Activated T-helper 1 cell treated with anti-CD3 and anti-CD28 coated beads, Interleukin-12 subunit alpha, Interleukin-12 subunit beta, Interleukin-2, Interleukin-4 antibody, amounts not matched to agents 30 ng/mL and 10 ng/mL and 1 ng/mL, durations not matched to agents 14 hours and 24 hours and 36 hours (primary cell): ENCODE measurements at regions of chr7 and their contacts with region 1.

Region 1: DNA sequence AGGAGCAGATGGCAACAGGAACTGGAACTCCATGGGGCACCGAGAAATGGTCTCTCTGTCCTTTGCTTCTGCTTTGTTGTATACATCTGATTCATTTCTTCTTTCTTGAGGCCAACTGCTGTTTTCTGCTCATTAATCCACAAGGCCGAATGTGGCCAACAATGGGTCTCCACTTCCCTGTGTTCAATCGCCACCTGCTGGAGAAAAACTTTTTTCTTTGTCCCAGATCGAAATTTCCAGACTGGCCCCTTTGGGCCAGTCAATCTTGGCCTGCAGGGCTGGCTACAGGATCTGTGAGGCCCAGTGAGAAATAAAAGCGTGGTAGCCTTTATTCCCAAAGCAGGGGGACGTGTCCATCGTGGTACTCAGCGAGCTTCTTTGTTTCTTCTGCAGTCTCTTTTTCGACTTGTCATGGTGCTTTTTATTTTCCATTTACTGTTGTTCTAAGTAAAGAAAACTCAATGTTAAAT is 58.8 kb downstream of the PARP12 start:
- DNase-seq: peak; percentile 6
- H3K4me3 Mint-ChIP-seq: no peak overlapping the region
- H3K27ac Mint-ChIP-seq: no peak overlapping the region
- H3K4me1 Mint-ChIP-seq: no peaks in the 10 kb centered on the region
- H3K27me3 Mint-ChIP-seq: peaks cover 2% of the 10 kb centered on the region

Region 2: DNA sequence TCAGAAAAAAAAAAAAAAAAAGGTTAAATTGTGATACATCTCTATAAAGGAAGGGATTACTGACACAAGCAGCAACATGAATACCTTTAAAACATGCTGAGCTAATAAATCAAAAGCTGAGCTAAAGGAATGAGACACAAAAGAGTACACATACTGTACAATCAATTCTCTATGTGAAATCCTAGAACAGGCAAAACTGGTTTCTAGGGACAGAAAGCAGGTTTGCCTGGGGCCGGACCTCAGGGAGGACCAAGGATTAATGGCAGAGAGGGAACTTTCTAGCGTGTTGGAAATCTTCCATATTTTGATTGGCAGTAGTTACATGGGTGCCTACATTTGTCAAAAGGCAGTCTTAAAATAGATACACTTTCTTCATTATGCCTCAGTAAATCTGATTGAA is 572.9 kb before region 1 on chr7:
- intact Hi-C with region 1: loop called (anchors 2 kb)
- DNase-seq: no peak
- H3K4me3 Mint-ChIP-seq: no peak overlapping the region
- H3K27ac Mint-ChIP-seq: no peak overlapping the region
- H3K4me1 Mint-ChIP-seq: peaks cover 6% of the 10 kb centered on the region
- H3K27me3 Mint-ChIP-seq: no peaks in the 10 kb centered on the region

Region 3: GRCh38 chr7:139500770-139501138 is 503.2 kb before region 1 on chr7:
- intact Hi-C with region 1: loop called (anchors 1 kb)
- DNase-seq: no peak
- H3K4me3 Mint-ChIP-seq: no peak overlapping the region
- H3K27ac Mint-ChIP-seq: no peak overlapping the region
- H3K4me1 Mint-ChIP-seq: peaks cover 15% of the 10 kb centered on the region
- H3K27me3 Mint-ChIP-seq: peaks cover 21% of the 10 kb centered on the region

Region 4: GRCh38 chr7:139602143-139602722 is 401.7 kb before region 1 on chr7:
- intact Hi-C with region 1: loop called (anchors 1 kb)
- DNase-seq: no peak
- H3K4me3 Mint-ChIP-seq: no peak overlapping the region
- H3K27ac Mint-ChIP-seq: no peak overlapping the region
- H3K4me1 Mint-ChIP-seq: no peaks in the 10 kb centered on the region
- H3K27me3 Mint-ChIP-seq: no peaks in the 10 kb centered on the region

Region 5: GRCh38 chr7:139620676-139621344 is 383.1 kb before region 1 on chr7:
- intact Hi-C with region 1: loop called (anchors 1 kb)
- DNase-seq: peak; percentile 26
- H3K4me3 Mint-ChIP-seq: no peak overlapping the region
- H3K27ac Mint-ChIP-seq: peak overlapping the region; percentile 22
- H3K4me1 Mint-ChIP-seq: peaks cover 34% of the 10 kb centered on the region
- H3K27me3 Mint-ChIP-seq: peaks cover 1% of the 10 kb centered on the region

Region 6: GRCh38 chr7:139645572-139646523 is 358.1 kb before region 1 on chr7:
- intact Hi-C with region 1: loop called (anchors 1 kb)
- DNase-seq: peak; percentile 68
- H3K4me3 Mint-ChIP-seq: no peak overlapping the region
- H3K27ac Mint-ChIP-seq: no peak overlapping the region
- H3K4me1 Mint-ChIP-seq: peaks cover 65% of the 10 kb centered on the region
- H3K27me3 Mint-ChIP-seq: peaks cover 1% of the 10 kb centered on the region

Region 7: DNA sequence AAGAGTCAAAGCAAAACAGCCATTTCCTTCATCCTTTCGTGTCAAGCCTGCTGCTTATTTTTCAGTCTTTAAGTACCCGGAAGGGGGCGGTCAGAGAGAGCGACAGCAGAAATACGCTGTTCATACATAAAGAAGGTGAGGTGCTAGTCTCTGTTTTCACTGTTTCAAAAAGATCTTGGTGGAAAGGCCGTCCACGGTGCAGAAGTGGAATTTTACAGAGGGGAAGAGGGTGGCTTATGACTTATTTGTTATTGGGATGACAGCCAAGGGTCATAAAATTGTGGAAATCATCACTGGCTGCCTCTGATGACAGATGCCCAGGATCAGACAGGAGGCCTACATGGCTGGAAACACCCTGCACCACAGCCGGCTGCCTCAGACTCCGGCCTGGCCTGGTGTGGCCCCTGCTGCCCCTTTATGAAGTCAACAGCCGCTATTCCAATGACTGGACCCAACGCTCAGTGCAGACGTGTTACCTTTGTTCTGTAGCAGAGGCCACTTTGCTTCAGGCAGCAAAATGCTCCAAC is 283.2 kb before region 1 on chr7:
- intact Hi-C with region 1: loop called (anchors 1 kb)
- DNase-seq: peak; percentile 11
- H3K4me3 Mint-ChIP-seq: no peak overlapping the region
- H3K27ac Mint-ChIP-seq: no peak overlapping the region
- H3K4me1 Mint-ChIP-seq: peaks cover 16% of the 10 kb centered on the region
- H3K27me3 Mint-ChIP-seq: no peaks in the 10 kb centered on the region

Region 8: DNA sequence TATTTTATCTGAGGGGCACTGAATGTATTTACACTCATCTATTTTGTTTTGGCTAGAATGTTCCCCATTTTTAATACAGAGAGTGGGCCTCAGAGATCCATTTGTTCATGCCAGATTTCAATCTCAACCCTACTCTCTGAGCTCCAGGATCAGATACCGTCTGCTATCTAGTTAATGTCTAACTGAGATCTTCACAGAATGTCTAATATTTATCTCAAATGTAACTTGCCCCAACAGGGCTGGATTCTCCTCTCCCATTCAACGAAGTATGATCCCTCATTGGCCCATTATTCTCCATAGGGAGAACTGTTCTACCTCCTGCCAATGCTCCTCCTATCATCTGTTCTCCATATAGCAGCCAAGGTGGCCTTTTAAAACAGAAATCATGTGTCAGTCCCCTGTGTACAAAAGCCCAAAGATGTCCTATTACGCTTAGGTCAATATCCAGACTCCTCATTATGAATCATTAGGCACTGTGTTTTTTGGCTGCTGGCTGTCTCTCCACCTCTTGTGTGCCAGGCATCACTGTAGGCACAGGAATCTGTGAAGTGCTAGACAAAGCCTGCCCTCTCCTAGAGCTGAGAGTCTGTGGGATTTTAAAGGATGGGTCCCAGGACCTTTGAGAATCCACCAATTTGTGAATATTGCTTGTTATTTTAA is 1378.0 kb after region 1 on chr7:
- intact Hi-C with region 1: no loop called
- DNase-seq: no peak
- H3K4me3 Mint-ChIP-seq: no peak overlapping the region
- H3K27ac Mint-ChIP-seq: no peak overlapping the region
- H3K4me1 Mint-ChIP-seq: no peaks in the 10 kb centered on the region
- H3K27me3 Mint-ChIP-seq: peaks cover 5% of the 10 kb centered on the region